Sigmoid colon (tissue), 7 donors: ENCODE measurements at regions of chr12 and their contacts with region 1.

Region 1: GRCh38 chr12:92987362-92987761 is 58.3 kb upstream of the EEA1 start:
- DNase-seq: no peak
- H3K4me3 ChIP-seq: peak overlapping the region in 1 of 4 donors; percentile 13
- H3K27ac ChIP-seq: peak overlapping the region in 1 of 4 donors; percentile 6
- H3K4me1 ChIP-seq: peaks cover 0 to 7% (median 3%) of the 10 kb centered on the region in 4 donors
- H3K27me3 ChIP-seq: no peaks in the 10 kb centered on the region
- CTCF ChIP-seq: peak; percentile 38 to 73 (median 62)
- EP300 ChIP-seq: no peak
- POLR2A ChIP-seq: no peak

Region 2: DNA sequence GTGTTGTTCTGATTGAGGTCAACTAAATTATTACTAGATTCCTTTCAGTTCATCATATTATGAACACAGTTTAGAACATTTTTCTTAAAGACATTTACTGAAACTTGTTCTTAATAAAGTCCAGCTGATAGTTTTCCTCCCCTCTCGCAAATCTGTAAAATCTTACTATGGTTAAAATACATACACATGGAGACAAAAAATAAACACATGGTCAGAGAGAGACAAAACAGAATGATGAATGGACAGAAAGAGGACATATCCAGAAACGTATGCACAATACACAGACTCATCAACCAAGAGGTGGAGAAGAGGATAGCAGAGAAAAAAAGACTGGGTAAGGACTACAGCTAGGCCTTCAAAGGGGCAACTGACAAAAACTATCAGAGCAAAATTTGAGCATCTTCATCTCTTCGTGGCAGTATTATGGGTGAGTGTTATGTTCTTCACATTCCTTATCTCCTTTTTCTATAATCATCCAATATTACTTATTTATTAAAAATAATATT is 96.7 kb before region 1 on chr12:
- intact Hi-C with region 1: no loop called
- DNase-seq: no peak
- H3K4me3 ChIP-seq: no peak overlapping the region
- H3K27ac ChIP-seq: no peak overlapping the region
- H3K4me1 ChIP-seq: peaks cover 0 to 15% (median 0%) of the 10 kb centered on the region in 4 donors
- H3K27me3 ChIP-seq: no peaks in the 10 kb centered on the region
- CTCF ChIP-seq: no peak
- EP300 ChIP-seq: no peak
- POLR2A ChIP-seq: no peak

Region 3: DNA sequence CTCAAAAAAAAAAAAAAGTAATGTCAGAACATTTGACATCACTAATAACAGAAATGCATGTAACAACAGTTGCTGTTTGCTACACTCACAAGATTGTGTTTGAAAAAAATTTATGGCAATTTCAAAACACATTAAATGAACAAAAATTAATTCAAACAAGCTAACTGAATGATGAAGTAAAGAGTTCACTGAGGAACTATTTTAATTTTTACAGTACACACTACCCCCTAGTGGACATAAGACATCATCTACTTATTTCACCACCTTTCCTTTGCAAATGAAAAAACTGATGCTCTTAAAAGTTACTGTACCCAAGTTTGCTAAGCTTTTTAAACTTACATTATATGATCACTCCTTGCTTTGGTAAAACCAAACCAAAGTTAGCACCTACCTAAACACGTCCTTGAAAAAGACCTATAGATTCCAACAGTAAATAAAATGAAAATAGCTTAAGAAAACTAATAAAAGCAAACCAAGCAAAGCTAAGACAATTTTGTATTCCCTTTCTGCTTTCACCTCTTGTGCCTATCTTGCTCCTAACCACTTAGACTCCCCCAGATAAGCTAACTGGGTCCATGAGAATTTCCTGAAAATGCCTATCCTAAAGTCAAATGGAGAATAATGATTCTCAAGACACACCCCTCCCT is 432.1 kb after region 1 on chr12:
- intact Hi-C with region 1: loop called (anchors 1 kb)
- DNase-seq: no peak
- H3K4me3 ChIP-seq: no peak overlapping the region
- H3K27ac ChIP-seq: no peak overlapping the region
- H3K4me1 ChIP-seq: peaks cover 0 to 69% (median 37%) of the 10 kb centered on the region in 4 donors
- H3K27me3 ChIP-seq: no peaks in the 10 kb centered on the region
- CTCF ChIP-seq: peak; percentile 41 to 65 (median 54)
- EP300 ChIP-seq: no peak
- POLR2A ChIP-seq: no peak